ENCODE measurements at regions of chr2 and their contacts with region 1.

Region 1: DNA sequence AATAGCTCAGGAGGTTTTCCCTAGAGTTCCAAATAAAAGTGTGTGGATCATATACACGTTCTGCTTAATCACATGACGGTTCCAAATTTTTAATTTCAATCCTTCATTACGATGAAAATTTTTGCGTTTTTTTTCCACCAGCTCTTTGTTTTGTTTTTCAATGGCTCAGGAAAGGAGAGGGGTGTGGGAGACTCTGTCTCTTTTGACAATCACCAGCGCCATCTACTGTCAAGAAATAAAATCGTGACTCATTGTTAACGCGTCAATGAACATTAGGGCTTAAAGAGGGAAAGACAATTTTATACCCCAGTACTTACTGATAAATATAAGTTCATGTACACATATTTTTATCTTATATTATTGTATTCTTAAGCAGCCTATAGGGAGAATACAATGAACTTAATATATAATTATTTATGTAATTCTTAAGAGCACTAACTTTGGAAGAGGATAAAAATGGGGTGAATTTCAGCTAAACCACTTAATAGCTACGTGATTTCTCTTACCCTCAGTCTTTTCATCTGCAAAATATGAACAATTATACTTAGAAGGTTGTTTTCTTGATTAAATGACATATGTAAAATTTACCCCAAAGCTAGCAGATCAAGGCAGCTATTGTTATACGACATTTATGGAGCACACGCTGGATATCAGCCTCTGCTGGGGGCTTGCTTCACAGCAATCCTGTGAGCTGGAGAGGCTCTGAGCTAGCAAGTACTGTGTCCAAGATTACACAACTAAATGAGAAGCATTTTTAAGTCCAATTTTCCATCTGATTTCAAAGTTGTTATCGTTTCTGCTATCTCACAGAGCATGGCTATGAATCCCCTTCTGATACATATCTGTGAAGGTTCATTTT is 47.4 kb upstream of the RMDN2 start:
- DNase-seq: peak; percentile 72
- H3K4me3 ChIP-seq: no peak overlapping the region
- H3K27ac ChIP-seq: no peak overlapping the region
- H3K4me1 ChIP-seq: no peaks in the 10 kb centered on the region
- CTCF ChIP-seq: peak; percentile 96

Region 2: DNA sequence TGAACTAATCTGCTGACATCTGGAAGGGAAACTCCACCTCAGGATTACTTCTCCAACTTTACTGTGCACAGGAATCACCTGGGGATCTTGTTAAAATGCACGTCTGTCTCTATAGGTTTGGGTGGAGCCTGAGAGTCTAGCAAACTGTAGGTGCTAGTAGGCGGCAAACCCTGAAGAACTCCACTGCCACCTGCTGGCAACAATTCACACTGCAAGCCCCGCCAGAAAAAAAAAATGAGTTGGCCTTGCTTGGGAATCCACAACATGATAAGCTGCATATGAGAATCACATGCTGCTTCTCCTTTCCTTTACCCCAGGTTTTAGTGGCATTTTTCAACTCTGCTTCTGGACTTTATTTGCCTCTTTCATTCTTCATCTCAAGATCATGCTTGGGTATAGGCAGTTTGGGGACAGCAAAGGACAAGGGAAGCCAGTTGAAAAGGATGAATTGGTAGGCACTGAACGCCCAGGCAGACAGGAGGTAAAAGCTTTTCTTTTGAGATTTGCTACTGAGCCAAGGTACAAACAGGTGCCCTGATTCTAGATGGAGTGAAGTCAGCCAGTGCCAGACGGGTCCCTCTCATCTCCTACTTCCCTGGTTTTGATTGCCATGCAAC is 1092.4 kb before region 1 on chr2:
- CTCF ChIA-PET with region 1: no interaction called
- POLR2A ChIA-PET with region 1: no interaction called
- intact Hi-C with region 1: loop called (anchors 10 kb)
- DNase-seq: peak; percentile 62
- H3K4me3 ChIP-seq: no peak overlapping the region
- H3K27ac ChIP-seq: no peak overlapping the region
- H3K4me1 ChIP-seq: peaks cover 9% of the 10 kb centered on the region
- CTCF ChIP-seq: peak; percentile 98

Region 3: DNA sequence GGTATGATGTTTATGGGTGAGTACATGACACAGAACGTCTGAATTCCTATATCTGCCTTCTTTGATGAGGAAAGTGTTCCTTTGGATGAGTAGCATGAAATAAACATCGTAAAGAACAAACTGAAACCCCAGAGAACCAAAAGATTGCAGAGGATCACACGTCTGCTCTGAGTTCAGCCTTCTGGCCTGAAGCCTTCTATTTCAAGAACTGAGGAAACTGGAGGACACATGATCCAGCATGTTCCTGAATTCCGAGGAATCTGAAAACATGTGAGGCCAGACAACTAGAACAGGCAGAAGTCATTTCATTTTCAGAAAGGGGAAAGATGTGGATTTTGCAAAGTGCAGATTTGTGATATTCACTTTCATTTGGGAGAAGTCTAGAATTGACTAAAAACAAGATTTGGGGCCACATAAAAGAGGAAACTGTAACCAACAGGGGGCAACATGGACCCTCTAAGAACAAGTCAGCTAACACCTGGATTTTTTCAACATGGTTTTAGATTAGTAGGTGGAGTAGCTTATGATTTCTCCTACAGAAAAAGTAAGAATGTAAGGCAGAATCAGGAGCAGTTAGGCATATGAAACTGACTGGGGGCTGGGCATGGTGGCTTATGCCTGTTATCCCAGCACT is 697.6 kb before region 1 on chr2:
- CTCF ChIA-PET with region 1: no interaction called
- POLR2A ChIA-PET with region 1: no interaction called
- intact Hi-C with region 1: loop called (anchors 5 kb)
- DNase-seq: peak; percentile 43
- H3K4me3 ChIP-seq: no peak overlapping the region
- H3K27ac ChIP-seq: no peak overlapping the region
- H3K4me1 ChIP-seq: no peaks in the 10 kb centered on the region
- CTCF ChIP-seq: peak; percentile 72

Region 4: DNA sequence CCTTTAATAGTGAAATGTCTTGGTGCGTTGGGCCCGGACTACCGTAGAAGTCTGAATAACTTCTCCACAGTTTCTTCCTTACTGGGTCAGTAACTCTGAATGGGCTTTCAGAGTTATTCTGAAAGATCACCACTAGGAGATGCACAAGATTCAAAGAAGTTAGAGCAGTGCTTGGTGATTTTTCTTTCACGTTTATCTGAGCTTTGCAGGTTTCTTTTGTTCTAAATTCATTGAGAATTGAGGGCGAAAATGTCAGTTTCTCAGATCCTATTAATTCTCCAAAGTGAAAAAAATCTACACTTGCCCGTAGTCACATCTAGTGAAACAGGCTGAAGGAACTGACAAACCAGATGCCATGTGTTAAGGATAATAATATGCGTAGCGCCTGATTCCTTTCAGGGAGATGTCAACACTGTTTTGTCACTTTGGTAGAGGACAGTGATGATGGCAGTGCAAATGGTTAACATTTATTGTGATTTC is 463.2 kb before region 1 on chr2:
- CTCF ChIA-PET with region 1: interaction called, 7 read pairs
- POLR2A ChIA-PET with region 1: interaction called, 4 read pairs
- intact Hi-C with region 1: loop called (anchors 2 kb)
- DNase-seq: peak; percentile 70
- H3K4me3 ChIP-seq: no peak overlapping the region
- H3K27ac ChIP-seq: no peak overlapping the region
- H3K4me1 ChIP-seq: no peaks in the 10 kb centered on the region
- CTCF ChIP-seq: peak; percentile 89

Region 5: GRCh38 chr2:37832590-37833197 is 45.0 kb before region 1 on chr2:
- CTCF ChIA-PET with region 1: interaction called, 4 read pairs
- POLR2A ChIA-PET with region 1: interaction called, 3 read pairs
- intact Hi-C with region 1: loop called (anchors 2 kb)
- DNase-seq: peak; percentile 75
- H3K4me3 ChIP-seq: no peak overlapping the region
- H3K27ac ChIP-seq: no peak overlapping the region
- H3K4me1 ChIP-seq: no peaks in the 10 kb centered on the region
- CTCF ChIP-seq: peak; percentile 90

Region 6: GRCh38 chr2:38474715-38475566 is 597.3 kb after region 1 on chr2:
- CTCF ChIA-PET with region 1: no interaction called
- POLR2A ChIA-PET with region 1: no interaction called
- intact Hi-C with region 1: no loop called
- DNase-seq: no peak
- H3K4me3 ChIP-seq: no peak overlapping the region
- H3K27ac ChIP-seq: no peak overlapping the region
- H3K4me1 ChIP-seq: no peaks in the 10 kb centered on the region
- CTCF ChIP-seq: no peak

Measured in OCI-LY7 (cell line).